ENCODE measurements at regions of chr1 and their contacts with region 1.

Region 1: GRCh38 chr1:44405041-44405797 is at the start of gene RNF220:
- DNase-seq: peak; percentile 38 to 50 (median 49)
- H3K4me3 ChIP-seq: peak within 1 kb of the TSS; percentile 37 to 81 (median 49)
- H3K4me3 Mint-ChIP-seq: peak within 1 kb of the TSS; percentile 92 to 99
- H3K27ac ChIP-seq: no peak within 1 kb of the TSS
- H3K27ac Mint-ChIP-seq: peak within 1 kb of the TSS in 2 of 7 donors; percentile 40 to 68
- H3K4me1 ChIP-seq: peaks cover 44 to 51% of the 10 kb centered on the region in 2 donors
- H3K4me1 Mint-ChIP-seq: peaks cover 24% of the 10 kb centered on the region
- H3K27me3 ChIP-seq: peaks cover 46 to 53% of the 10 kb centered on the region in 2 donors
- H3K27me3 Mint-ChIP-seq: peaks cover 8 to 31% (median 30%) of the 10 kb centered on the region in 3 donors
- CTCF ChIP-seq: no peak
- polyA plus RNA-seq, gene RNF220: 39.4 to 133 (median 49.4) TPM

Region 2: DNA sequence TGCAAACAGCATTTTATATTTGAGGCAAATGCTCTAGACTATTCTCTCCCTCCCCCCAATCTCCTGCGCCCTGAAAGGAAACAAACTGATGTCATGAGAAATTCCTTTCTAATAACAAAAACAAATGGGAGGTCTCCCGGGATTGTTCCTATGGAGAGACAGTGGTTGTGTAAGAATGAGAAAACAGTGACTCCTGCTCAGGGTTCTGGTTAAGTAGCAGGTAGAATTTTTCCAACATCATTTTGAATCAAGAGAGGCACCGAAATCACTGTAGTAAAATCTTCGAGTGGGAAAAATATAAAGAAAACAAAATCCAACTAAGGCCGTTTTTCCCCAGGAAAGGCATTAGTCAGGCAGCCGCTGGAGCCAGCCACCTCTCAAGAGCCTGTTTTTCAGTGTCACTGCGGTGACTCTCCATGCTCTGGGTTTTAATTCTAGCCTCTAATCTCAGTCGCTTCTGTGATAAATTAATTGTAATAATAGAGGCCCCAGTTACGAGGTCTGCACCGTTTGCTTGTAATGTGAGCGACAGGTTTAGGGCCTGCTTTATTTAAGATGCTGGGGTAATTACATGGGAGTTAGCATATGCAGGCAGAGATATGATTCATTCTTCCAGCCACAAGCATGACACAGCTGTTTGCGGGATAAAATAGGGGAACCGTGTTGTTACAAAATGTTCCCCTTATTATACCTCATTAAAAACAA is 80.2 kb after region 1 on chr1:
- intact Hi-C with region 1: loop called in 1 of 2 experiments (anchors 5 kb)
- DNase-seq: peak; percentile 82 to 94 (median 91)
- H3K4me3 ChIP-seq: peak overlapping the region in 1 of 3 experiments; percentile 66
- H3K4me3 Mint-ChIP-seq: no peak overlapping the region
- H3K27ac ChIP-seq: peak overlapping the region; percentile 72 to 85
- H3K27ac Mint-ChIP-seq: peak overlapping the region; percentile 82 to 91 (median 89)
- H3K4me1 ChIP-seq: peaks cover 37 to 47% of the 10 kb centered on the region in 2 donors
- H3K4me1 Mint-ChIP-seq: peaks cover 43% of the 10 kb centered on the region
- H3K27me3 ChIP-seq: no peaks in the 10 kb centered on the region
- H3K27me3 Mint-ChIP-seq: peaks cover 0 to 4% (median 1%) of the 10 kb centered on the region in 3 donors
- CTCF ChIP-seq: no peak

Measured in CD14-positive monocyte (primary cell).